Activated B cell treated with CpG ODN at 0.5 μM for 24 hours (primary cell): ENCODE measurements at regions of chr9 and their contacts with region 1.

Region 1: GRCh38 chr9:35060548-35061207 is 11.7 kb downstream of the VCP start:
- DNase-seq: no peak
- ATAC-seq: no peak
- H3K4me3 Mint-ChIP-seq: no peak overlapping the region
- H3K27ac Mint-ChIP-seq: no peak overlapping the region
- H3K4me1 Mint-ChIP-seq: no peaks in the 10 kb centered on the region
- H3K27me3 Mint-ChIP-seq: no peaks in the 10 kb centered on the region
- CTCF ChIP-seq: no peak

Region 2: GRCh38 chr9:35042081-35042604 is 18.5 kb before region 1 on chr9:
- CTCF ChIA-PET with region 1: no interaction called
- POLR2A ChIA-PET with region 1: no interaction called
- intact Hi-C with region 1: no loop called
- DNase-seq: no peak
- ATAC-seq: no peak
- H3K4me3 Mint-ChIP-seq: no peak overlapping the region
- H3K27ac Mint-ChIP-seq: peak overlapping the region; percentile 50
- H3K4me1 Mint-ChIP-seq: no peaks in the 10 kb centered on the region
- H3K27me3 Mint-ChIP-seq: no peaks in the 10 kb centered on the region
- CTCF ChIP-seq: no peak

Region 3: DNA sequence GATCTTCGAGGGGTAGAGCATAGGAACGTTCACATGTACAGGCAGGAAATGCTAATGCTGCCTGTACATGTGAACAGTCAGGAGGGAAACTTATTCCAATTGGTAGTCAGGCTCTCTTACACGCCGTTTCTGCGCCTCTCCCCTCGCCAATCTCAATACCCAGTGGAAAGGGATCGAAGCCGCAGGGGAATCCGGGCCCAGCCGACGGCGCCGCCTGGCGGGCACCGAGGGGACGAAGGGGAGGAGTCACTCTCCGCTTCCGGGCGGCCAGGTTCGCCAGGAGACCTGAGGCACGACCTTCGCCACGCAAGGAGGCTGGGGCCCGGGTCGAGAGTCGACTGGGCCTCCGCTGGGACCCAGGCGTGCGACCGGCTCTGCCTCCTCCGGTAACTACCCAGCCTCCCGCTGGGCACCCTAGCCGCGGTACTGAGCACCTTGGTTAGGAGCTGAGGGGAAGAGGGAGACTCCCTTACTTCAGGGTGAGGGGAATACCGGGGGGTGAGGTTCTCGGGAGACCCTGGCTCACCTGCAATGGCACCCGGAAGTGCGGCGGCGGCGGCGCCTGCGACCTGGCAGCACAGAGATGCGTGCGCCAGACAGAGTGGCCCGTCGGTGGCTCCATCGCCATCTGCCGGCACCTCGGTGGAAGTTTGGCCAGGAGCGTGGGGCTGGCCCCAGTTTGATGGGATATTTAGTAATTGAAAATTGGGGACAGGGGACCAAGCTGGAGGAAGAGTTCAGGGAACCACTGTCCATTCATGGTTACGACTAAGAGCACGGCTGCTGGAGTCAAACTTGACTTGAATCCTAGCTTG is 35.6 kb after region 1 on chr9 and contains the start of gene PIGO:
- CTCF ChIA-PET with region 1: no interaction called
- POLR2A ChIA-PET with region 1: no interaction called
- intact Hi-C with region 1: loop called (anchors 5 kb)
- DNase-seq: peak; percentile 81
- ATAC-seq: peak; percentile 92
- H3K4me3 Mint-ChIP-seq: peak within 1 kb of the TSS; percentile 87
- H3K27ac Mint-ChIP-seq: peak within 1 kb of the TSS; percentile 93
- H3K4me1 Mint-ChIP-seq: peaks cover 30% of the 10 kb centered on the region
- H3K27me3 Mint-ChIP-seq: no peaks in the 10 kb centered on the region
- CTCF ChIP-seq: peak; percentile 60
- total RNA-seq, gene PIGO: 30.4 and 34.1 TPM in 2 replicates